ENCODE measurements at regions of chr5 and their contacts with region 1.

Region 1: DNA sequence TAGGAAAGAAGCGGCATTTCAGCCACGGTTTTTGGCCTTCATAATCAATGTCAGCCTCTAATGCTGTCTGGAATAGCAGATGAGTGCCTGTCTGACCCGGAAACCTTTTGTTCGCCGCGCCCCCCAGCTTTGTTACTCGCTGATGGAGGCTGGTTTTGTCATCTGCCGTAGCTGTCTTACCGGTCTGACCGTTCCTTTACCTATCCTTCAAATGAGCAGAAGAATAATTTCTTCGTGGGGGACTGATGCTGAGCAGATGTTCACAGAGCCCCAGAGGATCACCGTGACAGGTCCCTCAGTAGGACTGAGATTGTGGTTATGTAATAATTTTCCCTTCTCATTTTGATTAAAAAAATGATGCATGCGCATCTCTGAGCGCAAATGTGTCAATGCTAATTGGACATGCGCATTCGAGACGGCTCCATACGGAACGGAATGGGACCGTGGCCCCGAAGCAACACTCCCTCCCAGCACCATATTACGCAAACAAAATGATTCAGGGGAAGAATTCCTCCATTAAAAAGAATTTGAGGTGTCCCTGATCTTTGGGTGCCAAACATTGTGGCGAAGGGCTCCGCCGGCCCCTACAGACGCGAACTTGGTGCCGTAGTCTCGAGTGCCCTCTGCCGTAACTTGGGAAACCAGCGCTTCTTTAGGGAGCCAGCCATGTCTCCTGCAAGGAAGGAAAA is 27.6 kb downstream of the TLX3 start:
- DNase-seq: no peak
- H3K4me3 ChIP-seq: peak overlapping the region; percentile 34 to 53 (median 43)
- H3K27ac ChIP-seq: no peak overlapping the region
- H3K4me1 ChIP-seq: peaks cover 0 to 13% (median 10%) of the 10 kb centered on the region in 4 donors
- H3K27me3 ChIP-seq: peaks cover 0 to 70% (median 0%) of the 10 kb centered on the region in 4 donors
- CTCF ChIP-seq: peak; percentile 50 to 70 (median 52)
- EP300 ChIP-seq: no peak
- POLR2A ChIP-seq: no peak

Region 2: DNA sequence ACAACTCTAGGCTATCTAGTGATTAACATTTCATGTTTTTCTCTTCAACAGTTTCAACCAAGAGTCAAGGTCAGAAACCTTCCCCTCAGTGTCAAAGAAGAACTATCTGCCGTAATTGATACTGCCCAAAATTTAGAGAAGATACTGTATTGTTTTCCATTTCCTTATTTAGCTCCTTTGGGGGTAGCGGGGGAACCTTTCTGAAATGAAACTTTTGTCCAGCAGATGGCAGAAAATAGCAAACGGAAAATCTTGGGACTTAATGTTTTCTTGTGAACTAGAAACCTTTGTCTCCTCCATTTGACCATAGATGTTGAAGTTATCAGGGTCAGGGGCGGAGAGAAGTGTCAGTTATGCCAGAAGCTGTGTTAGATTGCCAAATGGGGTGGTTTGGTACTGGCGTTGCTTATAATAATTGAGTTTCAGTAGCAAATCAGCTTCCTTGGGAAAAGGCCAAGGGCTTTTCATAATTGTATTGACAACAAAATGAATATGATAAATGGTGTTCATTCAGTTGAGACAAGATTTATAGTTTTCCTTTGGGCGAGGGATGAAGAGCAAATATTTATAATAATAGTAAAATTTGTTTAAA is 129.3 kb before region 1 on chr5:
- intact Hi-C with region 1: loop called (anchors 2 kb)
- DNase-seq: no peak
- H3K4me3 ChIP-seq: no peak overlapping the region
- H3K27ac ChIP-seq: no peak overlapping the region
- H3K4me1 ChIP-seq: peaks cover 0 to 4% (median 0%) of the 10 kb centered on the region in 4 donors
- H3K27me3 ChIP-seq: no peaks in the 10 kb centered on the region
- CTCF ChIP-seq: peak; percentile 42 to 60 (median 56)
- EP300 ChIP-seq: no peak
- POLR2A ChIP-seq: no peak